ENCODE measurements at regions of chr2 and their contacts with region 1.

Region 1: DNA sequence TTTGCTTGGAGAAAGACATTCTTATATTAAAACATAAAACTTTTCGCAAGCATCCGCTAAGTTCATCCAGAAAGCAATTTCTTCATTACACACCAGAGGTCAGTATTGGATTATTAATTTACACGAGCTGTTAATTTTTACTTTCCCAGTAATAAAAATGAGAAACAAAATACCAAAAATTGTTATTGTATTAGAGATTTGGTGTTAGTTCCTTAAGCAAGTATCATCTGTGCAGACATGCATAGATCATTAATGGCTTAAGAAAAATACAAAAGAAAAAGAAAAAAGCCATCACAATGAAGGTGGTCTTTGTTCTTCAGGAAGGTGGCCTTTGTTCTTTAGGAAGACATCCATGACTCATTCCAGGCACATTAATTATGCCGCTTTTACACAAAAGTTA is 53.6 kb upstream of the HNMT start:
- DNase-seq: no peak
- H3K4me3 ChIP-seq: no peak overlapping the region
- H3K27ac ChIP-seq: no peak overlapping the region
- H3K4me1 ChIP-seq: peaks cover 0 to 3% (median 0%) of the 10 kb centered on the region in 4 donors
- H3K27me3 ChIP-seq: no peaks in the 10 kb centered on the region
- CTCF ChIP-seq: peak; percentile 56 to 65 (median 59)
- EP300 ChIP-seq: no peak
- POLR2A ChIP-seq: no peak

Region 2: GRCh38 chr2:137975280-137976265 is 64.9 kb after region 1 on chr2:
- in situ Hi-C with region 1: no loop called
- intact Hi-C with region 1: no loop called
- DNase-seq: no peak
- H3K4me3 ChIP-seq: no peak overlapping the region
- H3K27ac ChIP-seq: peak overlapping the region; percentile 68 to 82 (median 72)
- H3K4me1 ChIP-seq: peaks cover 0 to 66% (median 25%) of the 10 kb centered on the region in 4 donors
- H3K27me3 ChIP-seq: no peaks in the 10 kb centered on the region
- CTCF ChIP-seq: no peak
- EP300 ChIP-seq: no peak
- POLR2A ChIP-seq: no peak

Region 3: DNA sequence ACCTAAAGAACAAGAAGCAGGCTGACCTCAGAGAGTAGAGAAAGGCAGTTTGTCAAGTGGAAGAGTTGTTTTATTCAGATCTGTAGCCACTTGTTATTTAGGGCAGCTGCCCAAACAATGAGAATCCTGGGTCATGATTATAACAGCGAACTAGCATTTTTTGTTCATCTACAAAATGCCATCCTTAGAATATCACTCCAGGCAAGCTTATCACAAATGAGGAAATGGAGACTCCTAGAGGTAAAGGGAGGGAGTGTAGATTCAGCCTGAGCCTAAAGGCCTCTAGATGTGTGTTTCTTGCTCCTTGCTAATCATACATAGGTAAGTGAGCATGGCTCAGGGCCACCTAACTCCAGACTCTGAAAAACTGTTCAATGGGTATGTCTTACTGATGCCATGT is 179.7 kb after region 1 on chr2:
- in situ Hi-C with region 1: loop called in 2 of 4 experiments (anchors 10 to 25 kb)
- intact Hi-C with region 1: no loop called
- DNase-seq: no peak
- H3K4me3 ChIP-seq: no peak overlapping the region
- H3K27ac ChIP-seq: no peak overlapping the region
- H3K4me1 ChIP-seq: peaks cover 0 to 18% (median 10%) of the 10 kb centered on the region in 4 donors
- H3K27me3 ChIP-seq: no peaks in the 10 kb centered on the region
- CTCF ChIP-seq: peak; percentile 49 to 60 (median 59)
- EP300 ChIP-seq: no peak
- POLR2A ChIP-seq: no peak

Region 4: GRCh38 chr2:138395565-138396306 is 485.1 kb after region 1 on chr2:
- in situ Hi-C with region 1: loop called in 2 of 4 experiments (anchors 25 kb)
- intact Hi-C with region 1: no loop called
- DNase-seq: no peak
- H3K4me3 ChIP-seq: no peak overlapping the region
- H3K27ac ChIP-seq: no peak overlapping the region
- H3K4me1 ChIP-seq: no peaks in the 10 kb centered on the region
- H3K27me3 ChIP-seq: no peaks in the 10 kb centered on the region
- CTCF ChIP-seq: no peak
- EP300 ChIP-seq: no peak
- POLR2A ChIP-seq: no peak

Region 5: GRCh38 chr2:138787053-138787666 is 876.5 kb after region 1 on chr2:
- in situ Hi-C with region 1: loop called in 2 of 4 experiments (anchors 25 kb)
- intact Hi-C with region 1: no loop called
- DNase-seq: no peak
- H3K4me3 ChIP-seq: no peak overlapping the region
- H3K27ac ChIP-seq: no peak overlapping the region
- H3K4me1 ChIP-seq: no peaks in the 10 kb centered on the region
- H3K27me3 ChIP-seq: peaks cover 11% of the 10 kb centered on the region
- CTCF ChIP-seq: peak; percentile 56 to 67 (median 62)
- EP300 ChIP-seq: no peak
- POLR2A ChIP-seq: no peak

Region 6: DNA sequence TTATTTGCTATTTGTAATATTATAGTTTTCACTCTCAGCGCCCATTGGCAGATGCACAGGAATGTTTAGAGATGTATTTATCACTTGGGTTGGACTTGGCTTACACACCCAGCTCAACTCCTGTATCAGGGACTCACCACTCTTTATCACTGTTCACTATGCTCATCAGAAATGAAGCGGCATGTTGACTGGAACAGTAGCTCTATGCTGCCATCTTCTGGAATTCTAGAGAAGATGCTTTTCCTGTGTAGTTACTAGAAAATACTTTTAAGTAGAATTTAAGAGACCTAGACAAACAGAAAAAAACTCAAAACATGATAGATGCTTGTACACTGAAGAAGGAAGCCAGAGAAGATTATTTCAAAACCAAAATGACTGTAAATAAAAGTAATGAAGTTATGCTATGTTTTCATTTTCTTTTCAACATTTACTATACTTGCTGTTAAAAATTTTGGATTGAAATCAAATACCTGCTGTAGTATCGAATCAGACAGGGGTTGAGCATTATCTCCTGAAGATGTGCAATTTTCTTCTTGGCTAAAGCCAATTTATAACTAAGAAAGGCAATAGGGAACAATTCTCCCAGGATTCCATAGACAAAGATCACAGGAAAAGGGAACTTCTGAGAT is 916.9 kb after region 1 on chr2:
- in situ Hi-C with region 1: loop called in 2 of 4 experiments (anchors 10 to 25 kb)
- intact Hi-C with region 1: loop called (anchors 5 kb)
- DNase-seq: no peak
- H3K4me3 ChIP-seq: no peak overlapping the region
- H3K27ac ChIP-seq: no peak overlapping the region
- H3K4me1 ChIP-seq: no peaks in the 10 kb centered on the region
- H3K27me3 ChIP-seq: no peaks in the 10 kb centered on the region
- CTCF ChIP-seq: peak; percentile 64 to 70 (median 68)
- EP300 ChIP-seq: no peak
- POLR2A ChIP-seq: no peak